Sigmoid colon (tissue), 7 donors: ENCODE measurements at regions of chr12 and their contacts with region 1.

Region 1: GRCh38 chr12:7460375-7461259 is 16.7 kb upstream of the CD163L1 start:
- DNase-seq: no peak
- H3K4me3 ChIP-seq: no peak overlapping the region
- H3K27ac ChIP-seq: no peak overlapping the region
- H3K4me1 ChIP-seq: no peaks in the 10 kb centered on the region
- H3K27me3 ChIP-seq: no peaks in the 10 kb centered on the region
- CTCF ChIP-seq: peak in 3 of 4 experiments; percentile 8 to 54 (median 40)
- EP300 ChIP-seq: no peak
- POLR2A ChIP-seq: no peak

Region 2: DNA sequence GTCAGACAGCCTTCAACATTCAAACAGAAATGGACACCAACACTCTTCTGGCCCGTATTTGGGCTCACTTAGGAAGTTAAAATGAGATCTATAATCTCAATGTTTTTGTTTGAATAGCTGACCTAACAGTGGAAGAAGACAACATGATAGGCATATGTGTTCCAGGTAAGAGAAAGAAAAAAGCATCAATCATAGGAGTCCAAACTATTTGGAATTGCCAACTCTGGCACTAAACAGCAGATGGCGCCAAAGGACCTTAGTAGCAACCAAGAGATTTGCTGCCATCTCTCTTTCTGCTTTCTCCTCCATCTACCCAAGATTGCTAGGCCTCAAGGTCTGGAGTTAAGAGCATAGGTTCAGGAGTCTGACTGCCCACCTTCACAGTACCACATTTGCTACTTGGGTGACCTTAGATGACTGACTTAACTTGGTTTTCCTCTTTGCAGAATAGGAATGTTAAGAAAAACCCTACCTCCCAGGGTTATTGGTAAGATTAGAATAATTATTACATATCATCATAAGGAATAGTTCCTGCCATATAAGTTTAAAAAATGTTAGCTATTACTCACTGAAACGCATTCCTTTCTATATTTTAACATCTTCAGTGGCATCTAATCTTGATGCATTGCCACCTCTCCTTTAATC is 240.9 kb before region 1 on chr12:
- intact Hi-C with region 1: loop called (anchors 2 kb)
- DNase-seq: peak; percentile 77
- H3K4me3 ChIP-seq: no peak overlapping the region
- H3K27ac ChIP-seq: no peak overlapping the region
- H3K4me1 ChIP-seq: no peaks in the 10 kb centered on the region
- H3K27me3 ChIP-seq: no peaks in the 10 kb centered on the region
- CTCF ChIP-seq: peak; percentile 63 to 82 (median 78)
- EP300 ChIP-seq: no peak
- POLR2A ChIP-seq: no peak

Region 3: DNA sequence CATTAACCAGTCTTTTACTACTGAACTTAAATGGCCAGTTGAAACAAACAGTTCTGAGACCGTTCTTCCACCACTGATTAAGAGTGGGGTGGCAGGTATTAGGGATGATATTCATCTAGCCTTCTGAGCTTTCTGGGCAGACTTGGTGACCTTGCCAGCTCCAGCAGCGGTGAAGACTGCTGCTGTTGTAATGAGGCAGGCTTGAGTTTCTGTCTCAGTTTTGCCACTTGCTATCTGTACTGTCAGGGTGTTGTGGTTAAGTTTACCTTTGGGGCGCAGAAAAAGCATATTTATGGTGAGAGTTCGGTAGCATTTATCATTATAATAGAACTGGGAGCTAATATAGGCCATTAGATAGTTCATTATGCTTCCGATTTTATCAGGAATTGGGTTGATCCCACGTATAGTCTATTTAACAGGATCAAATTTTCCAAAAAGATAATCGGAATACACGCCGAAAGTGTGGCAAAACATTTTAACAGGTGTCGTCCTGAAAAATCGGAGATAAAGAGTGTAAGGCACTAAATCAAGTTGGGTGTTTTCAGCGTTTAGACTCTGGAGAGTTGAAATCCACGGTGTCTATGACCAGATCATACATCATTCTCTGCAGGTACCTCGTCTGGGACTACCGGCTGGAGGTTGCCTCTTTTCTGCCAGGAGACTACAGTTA is 620.8 kb after region 1 on chr12:
- intact Hi-C with region 1: no loop called
- DNase-seq: no peak
- H3K4me3 ChIP-seq: peak overlapping the region; percentile 63 to 89 (median 86)
- H3K27ac ChIP-seq: peak overlapping the region; percentile 87 to 93 (median 91)
- H3K4me1 ChIP-seq: peaks cover 0 to 32% (median 22%) of the 10 kb centered on the region in 4 donors
- H3K27me3 ChIP-seq: no peaks in the 10 kb centered on the region
- CTCF ChIP-seq: no peak
- EP300 ChIP-seq: no peak
- POLR2A ChIP-seq: no peak